Sigmoid colon (tissue), 7 donors: ENCODE measurements at regions of chr1 and their contacts with region 1.

Region 1: DNA sequence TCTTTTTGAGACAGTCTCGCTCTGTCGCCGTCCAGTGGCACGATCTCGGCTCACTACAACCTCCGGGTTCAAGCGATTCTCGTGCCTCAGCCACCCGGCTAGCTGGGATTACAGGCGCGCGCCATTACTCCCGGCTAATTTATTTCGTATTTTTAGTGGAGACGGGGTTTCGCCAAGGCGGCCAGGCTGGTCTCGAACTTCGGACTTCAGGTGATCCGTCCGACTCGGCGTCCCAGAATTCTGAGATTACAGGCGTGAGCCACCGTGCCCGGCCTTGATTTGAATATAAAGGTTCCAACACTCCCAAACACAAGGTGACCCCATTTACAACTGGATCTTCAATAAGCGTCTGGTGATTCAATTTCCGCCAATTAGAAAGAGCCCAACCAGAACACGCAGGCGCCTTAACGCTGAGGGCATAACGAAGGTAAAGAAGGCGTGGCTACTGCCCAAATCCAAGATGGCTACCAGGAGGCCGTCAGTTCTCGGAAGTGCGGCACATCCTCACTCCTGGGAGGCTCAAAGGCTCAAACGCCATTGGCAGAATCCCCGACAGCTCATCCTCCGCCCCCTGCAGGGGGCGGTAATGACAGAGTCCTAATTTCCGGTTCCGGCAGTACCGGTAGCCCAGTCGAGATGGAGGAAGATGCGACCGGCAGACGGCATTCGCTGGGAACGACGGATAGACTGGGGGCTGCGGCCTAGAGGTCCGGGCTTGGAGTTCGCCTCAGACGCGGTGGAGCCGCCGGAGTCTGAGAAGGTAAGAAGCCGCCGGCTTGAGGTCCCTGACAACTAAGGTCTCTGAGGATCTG is at the start of gene SLC25A44:
- DNase-seq: peak; percentile 99
- H3K4me3 ChIP-seq: peak within 1 kb of the TSS; percentile 75 to 91 (median 86)
- H3K27ac ChIP-seq: peak within 1 kb of the TSS; percentile 82 to 85 (median 85)
- H3K4me1 ChIP-seq: peaks cover 0 to 29% (median 17%) of the 10 kb centered on the region in 4 donors
- H3K27me3 ChIP-seq: no peaks in the 10 kb centered on the region
- CTCF ChIP-seq: peak in 3 of 4 experiments; percentile 31 to 48 (median 45)
- EP300 ChIP-seq: peak in 1 of 4 donors; percentile 12
- POLR2A ChIP-seq: peak in 1 of 2 donors; percentile 56
- total RNA-seq, gene SLC25A44: 8.6 to 13.3 (median 9.4) TPM

Region 2: DNA sequence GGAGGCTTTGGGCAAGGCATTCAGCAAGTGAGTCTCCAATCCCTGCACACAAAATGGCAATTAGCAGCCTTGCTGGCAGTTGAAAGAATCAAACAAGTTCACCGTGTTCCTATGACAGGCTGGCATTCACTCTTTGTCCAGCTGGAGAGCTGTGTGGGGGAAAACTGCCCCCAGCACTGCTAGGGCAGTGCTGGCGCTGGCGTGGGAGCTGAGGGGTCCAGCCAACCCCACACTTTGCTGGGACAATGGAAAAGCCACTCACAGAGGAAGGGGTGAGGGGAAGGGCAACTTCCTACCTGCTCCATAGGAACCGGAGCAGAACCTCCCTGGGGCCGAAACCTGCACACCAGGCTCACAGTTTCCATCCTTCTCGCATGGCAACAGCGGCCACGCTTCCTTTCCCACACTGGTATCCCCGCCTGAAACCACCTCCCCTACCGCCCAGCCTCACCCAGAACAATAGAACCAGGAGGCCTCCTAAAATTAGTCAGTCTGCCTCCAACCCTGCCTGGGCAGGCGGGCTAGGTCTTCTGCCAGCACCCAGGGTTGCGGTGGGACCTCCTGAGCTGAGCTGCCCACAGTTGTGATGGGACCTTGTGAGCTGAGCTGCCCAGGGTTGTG is 1296.8 kb before region 1 on chr1:
- intact Hi-C with region 1: no loop called
- DNase-seq: no peak
- H3K4me3 ChIP-seq: no peak overlapping the region
- H3K27ac ChIP-seq: no peak overlapping the region
- H3K4me1 ChIP-seq: no peaks in the 10 kb centered on the region
- H3K27me3 ChIP-seq: no peaks in the 10 kb centered on the region
- CTCF ChIP-seq: no peak
- EP300 ChIP-seq: no peak
- POLR2A ChIP-seq: no peak

Region 3: DNA sequence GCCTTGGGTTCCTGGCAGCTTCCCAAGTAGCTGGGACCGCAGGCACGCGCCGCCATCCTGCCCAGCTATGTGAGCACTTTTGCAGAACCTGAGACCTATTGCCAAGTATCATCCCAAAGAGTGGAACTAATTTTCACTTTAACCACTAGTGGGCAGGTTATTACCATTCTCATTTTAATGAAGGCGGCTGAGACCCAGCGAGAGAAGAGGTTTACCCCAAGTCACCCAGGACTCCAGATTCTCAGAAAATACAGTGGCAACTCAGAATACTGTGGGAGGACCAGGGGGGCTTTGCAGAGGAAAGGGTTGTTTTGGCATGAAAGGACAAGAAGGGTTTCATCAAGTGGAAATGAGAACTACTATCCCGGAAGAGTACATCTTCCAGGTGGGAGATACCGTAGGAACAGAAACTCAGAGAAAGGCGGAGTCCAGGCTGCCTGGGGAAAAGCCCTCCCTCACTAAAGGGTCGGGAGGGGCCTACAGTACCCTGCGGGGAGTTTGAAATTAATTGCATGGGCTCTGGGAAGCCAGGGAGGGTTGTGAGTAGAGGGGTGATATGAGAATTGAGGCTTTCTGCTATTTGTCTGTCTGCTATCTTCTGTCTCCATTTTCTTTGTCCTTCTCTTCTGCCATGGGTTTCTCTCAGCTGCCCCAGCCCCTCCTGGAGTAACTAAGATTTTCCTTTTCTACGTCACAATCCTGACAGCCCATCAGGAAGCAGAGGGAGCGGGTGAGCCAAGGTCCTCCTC is 47.5 kb before region 1 on chr1:
- intact Hi-C with region 1: loop called (anchors 1 kb)
- DNase-seq: no peak
- H3K4me3 ChIP-seq: no peak overlapping the region
- H3K27ac ChIP-seq: peak overlapping the region in 1 of 4 donors; percentile 38
- H3K4me1 ChIP-seq: peaks cover 0 to 40% (median 36%) of the 10 kb centered on the region in 4 donors
- H3K27me3 ChIP-seq: peaks cover 5 to 21% (median 18%) of the 10 kb centered on the region in 3 donors
- CTCF ChIP-seq: peak; percentile 66 to 75 (median 72)
- EP300 ChIP-seq: no peak
- POLR2A ChIP-seq: no peak

Region 4: GRCh38 chr1:156212833-156213643 is 19.3 kb after region 1 on chr1 and contains the start of gene PMF1:
- intact Hi-C with region 1: loop called (anchors 2 kb)
- DNase-seq: peak; percentile 99
- H3K4me3 ChIP-seq: peak within 1 kb of the TSS; percentile 53 to 69 (median 62)
- H3K27ac ChIP-seq: peak within 1 kb of the TSS; percentile 85 to 95 (median 94)
- H3K4me1 ChIP-seq: peaks cover 0 to 22% (median 18%) of the 10 kb centered on the region in 4 donors
- H3K27me3 ChIP-seq: no peaks in the 10 kb centered on the region
- CTCF ChIP-seq: no peak
- EP300 ChIP-seq: no peak
- POLR2A ChIP-seq: peak; percentile 27 to 61
- total RNA-seq, gene PMF1: 41.1 to 61.2 (median 50.8) TPM

Region 5: GRCh38 chr1:156414461-156415064 is 220.9 kb after region 1 on chr1:
- intact Hi-C with region 1: no loop called
- DNase-seq: no peak
- H3K4me3 ChIP-seq: no peak overlapping the region
- H3K27ac ChIP-seq: no peak overlapping the region
- H3K4me1 ChIP-seq: no peaks in the 10 kb centered on the region
- H3K27me3 ChIP-seq: peaks cover 17 to 72% (median 62%) of the 10 kb centered on the region in 3 donors
- CTCF ChIP-seq: no peak
- EP300 ChIP-seq: no peak
- POLR2A ChIP-seq: no peak

Region 6: GRCh38 chr1:157138220-157139051 is 944.7 kb after region 1 on chr1 and contains the start of gene ETV3:
- intact Hi-C with region 1: loop called (anchors 10 kb)
- DNase-seq: peak; percentile 97
- H3K4me3 ChIP-seq: peak within 1 kb of the TSS; percentile 80 to 96 (median 92)
- H3K27ac ChIP-seq: peak within 1 kb of the TSS; percentile 96 to 99 (median 98)
- H3K4me1 ChIP-seq: peaks cover 0 to 27% (median 22%) of the 10 kb centered on the region in 4 donors
- H3K27me3 ChIP-seq: no peaks in the 10 kb centered on the region
- CTCF ChIP-seq: no peak
- EP300 ChIP-seq: peak in 1 of 4 donors; percentile 0
- POLR2A ChIP-seq: peak; percentile 83 to 93
- total RNA-seq, gene ETV3: 14.1 to 20.2 (median 17.6) TPM